Endothelial cell of umbilical vein (primary cell): ENCODE measurements at regions of chr12 and their contacts with region 1.

Region 1: DNA sequence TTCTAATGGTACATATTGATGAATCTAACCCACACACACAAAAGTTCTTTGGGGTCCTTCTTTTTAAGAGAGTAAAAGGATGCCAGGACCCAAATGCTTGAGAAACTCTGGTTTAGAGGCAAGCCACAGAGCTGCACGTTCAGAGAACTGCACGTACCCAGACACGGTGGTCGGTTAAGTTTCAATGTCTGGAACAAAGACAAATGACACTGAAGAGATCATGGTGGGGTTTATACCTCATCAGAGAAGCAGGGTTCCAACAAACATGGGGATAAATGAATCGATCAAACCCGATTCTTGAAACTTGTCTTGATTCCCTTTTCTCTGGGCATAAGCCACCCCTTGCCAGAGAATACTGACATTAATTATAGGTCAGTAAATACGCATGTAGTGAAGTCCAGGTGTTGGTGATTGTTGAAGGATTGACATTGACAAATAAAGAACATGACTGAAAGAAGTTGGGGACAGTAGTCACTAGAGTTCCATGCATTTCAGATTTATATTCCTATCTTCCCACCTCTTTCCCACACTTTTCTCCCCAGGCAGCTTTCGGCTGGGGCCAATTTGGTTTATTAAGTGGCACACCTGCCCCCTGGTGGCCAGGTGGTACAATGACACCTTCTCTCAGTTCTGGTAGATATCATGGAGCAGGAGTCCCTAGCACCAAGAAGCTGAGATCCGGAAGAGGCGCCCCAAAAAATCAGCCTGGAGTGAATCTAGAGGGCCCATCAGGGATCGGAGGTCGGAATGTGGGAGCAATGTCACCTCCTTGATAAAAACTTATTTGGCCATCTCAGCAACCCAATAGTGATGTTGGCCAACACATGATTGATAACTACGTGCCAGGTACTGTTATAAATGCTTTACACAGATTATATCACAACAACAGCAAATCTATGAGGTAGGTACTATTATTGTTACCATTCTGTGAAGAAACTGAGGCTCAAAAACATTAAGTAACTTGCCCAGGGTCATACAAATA is 17.8 kb upstream of the HDAC7 start:
- DNase-seq: peak; percentile 70
- H3K4me3 ChIP-seq: no peak overlapping the region
- H3K27ac ChIP-seq: no peak overlapping the region
- H3K4me1 ChIP-seq: no peaks in the 10 kb centered on the region
- H3K27me3 ChIP-seq: no peaks in the 10 kb centered on the region
- CTCF ChIP-seq: peak; percentile 75 to 80
- POLR2A ChIP-seq: no peak

Region 2: GRCh38 chr12:47705566-47706425 is 131.7 kb before region 1 on chr12 and contains the start of gene RPAP3:
- CTCF ChIA-PET with region 1: interaction called, 172 read pairs
- POLR2A ChIA-PET with region 1: no interaction called
- dilution Hi-C with region 1: no loop called
- intact Hi-C with region 1: no loop called
- DNase-seq: peak; percentile 93
- H3K4me3 ChIP-seq: peak within 1 kb of the TSS; percentile 65 to 90 (median 83)
- H3K27ac ChIP-seq: peak within 1 kb of the TSS; percentile 61
- H3K4me1 ChIP-seq: peaks cover 14% of the 10 kb centered on the region
- H3K27me3 ChIP-seq: no peaks in the 10 kb centered on the region
- CTCF ChIP-seq: peak; percentile 62 to 78
- POLR2A ChIP-seq: peak; percentile 87
- total RNA-seq, gene RPAP3: 29.8 and 32.5 TPM in 2 replicates

Region 3: GRCh38 chr12:47736877-47737676 is 100.4 kb before region 1 on chr12:
- CTCF ChIA-PET with region 1: interaction called, 136 read pairs
- POLR2A ChIA-PET with region 1: interaction called, 3 read pairs
- dilution Hi-C with region 1: no loop called
- intact Hi-C with region 1: loop called (anchors 1 kb)
- DNase-seq: peak; percentile 14
- H3K4me3 ChIP-seq: no peak overlapping the region
- H3K27ac ChIP-seq: no peak overlapping the region
- H3K4me1 ChIP-seq: peaks cover 14% of the 10 kb centered on the region
- H3K27me3 ChIP-seq: no peaks in the 10 kb centered on the region
- CTCF ChIP-seq: no peak
- POLR2A ChIP-seq: no peak

Region 4: DNA sequence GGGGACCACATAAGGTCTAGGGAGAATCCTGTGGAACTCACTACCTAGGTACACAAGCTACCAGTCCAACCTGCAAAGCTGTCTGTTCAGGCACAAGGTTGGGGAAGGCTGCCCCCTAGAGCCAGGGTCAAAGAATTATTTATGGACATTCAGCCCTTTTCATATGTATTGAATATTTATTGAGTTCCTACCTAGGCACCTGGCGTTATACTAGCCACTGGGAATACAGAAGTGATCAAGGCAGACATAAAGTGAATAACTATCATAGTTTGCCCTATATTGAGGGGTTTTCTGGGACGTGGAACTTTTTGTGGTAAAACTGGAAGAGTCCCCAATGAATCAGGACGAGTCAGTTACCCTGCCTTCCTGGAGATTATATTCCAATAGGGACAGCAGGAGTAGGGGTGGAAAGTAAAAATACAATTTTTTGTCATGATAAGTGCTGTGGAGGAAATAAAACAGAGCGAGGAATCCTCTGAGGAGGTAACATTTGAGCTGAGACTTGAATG is 70.2 kb before region 1 on chr12:
- CTCF ChIA-PET with region 1: interaction called, 99 read pairs
- POLR2A ChIA-PET with region 1: no interaction called
- dilution Hi-C with region 1: no loop called
- intact Hi-C with region 1: no loop called
- DNase-seq: peak; percentile 66
- H3K4me3 ChIP-seq: no peak overlapping the region
- H3K27ac ChIP-seq: no peak overlapping the region
- H3K4me1 ChIP-seq: peaks cover 6% of the 10 kb centered on the region
- H3K27me3 ChIP-seq: no peaks in the 10 kb centered on the region
- CTCF ChIP-seq: peak; percentile 64 to 66
- POLR2A ChIP-seq: no peak

Region 5: GRCh38 chr12:47797441-47797840 is 40.0 kb before region 1 on chr12:
- CTCF ChIA-PET with region 1: interaction called, 427 read pairs
- POLR2A ChIA-PET with region 1: interaction called, 6 read pairs
- dilution Hi-C with region 1: no loop called
- intact Hi-C with region 1: loop called (anchors 1 kb)
- DNase-seq: no peak
- H3K4me3 ChIP-seq: no peak overlapping the region
- H3K27ac ChIP-seq: no peak overlapping the region
- H3K4me1 ChIP-seq: peaks cover 23% of the 10 kb centered on the region
- H3K27me3 ChIP-seq: no peaks in the 10 kb centered on the region
- CTCF ChIP-seq: peak; percentile 6 to 45
- POLR2A ChIP-seq: no peak

Region 6: GRCh38 chr12:47850153-47851084 is 12.9 kb after region 1 on chr12:
- CTCF ChIA-PET with region 1: interaction called, 21 read pairs
- POLR2A ChIA-PET with region 1: no interaction called
- dilution Hi-C with region 1: no loop called
- intact Hi-C with region 1: no loop called
- DNase-seq: no peak
- H3K4me3 ChIP-seq: no peak overlapping the region
- H3K27ac ChIP-seq: no peak overlapping the region
- H3K4me1 ChIP-seq: peaks cover 7% of the 10 kb centered on the region
- H3K27me3 ChIP-seq: no peaks in the 10 kb centered on the region
- CTCF ChIP-seq: no peak
- POLR2A ChIP-seq: no peak

Region 7: DNA sequence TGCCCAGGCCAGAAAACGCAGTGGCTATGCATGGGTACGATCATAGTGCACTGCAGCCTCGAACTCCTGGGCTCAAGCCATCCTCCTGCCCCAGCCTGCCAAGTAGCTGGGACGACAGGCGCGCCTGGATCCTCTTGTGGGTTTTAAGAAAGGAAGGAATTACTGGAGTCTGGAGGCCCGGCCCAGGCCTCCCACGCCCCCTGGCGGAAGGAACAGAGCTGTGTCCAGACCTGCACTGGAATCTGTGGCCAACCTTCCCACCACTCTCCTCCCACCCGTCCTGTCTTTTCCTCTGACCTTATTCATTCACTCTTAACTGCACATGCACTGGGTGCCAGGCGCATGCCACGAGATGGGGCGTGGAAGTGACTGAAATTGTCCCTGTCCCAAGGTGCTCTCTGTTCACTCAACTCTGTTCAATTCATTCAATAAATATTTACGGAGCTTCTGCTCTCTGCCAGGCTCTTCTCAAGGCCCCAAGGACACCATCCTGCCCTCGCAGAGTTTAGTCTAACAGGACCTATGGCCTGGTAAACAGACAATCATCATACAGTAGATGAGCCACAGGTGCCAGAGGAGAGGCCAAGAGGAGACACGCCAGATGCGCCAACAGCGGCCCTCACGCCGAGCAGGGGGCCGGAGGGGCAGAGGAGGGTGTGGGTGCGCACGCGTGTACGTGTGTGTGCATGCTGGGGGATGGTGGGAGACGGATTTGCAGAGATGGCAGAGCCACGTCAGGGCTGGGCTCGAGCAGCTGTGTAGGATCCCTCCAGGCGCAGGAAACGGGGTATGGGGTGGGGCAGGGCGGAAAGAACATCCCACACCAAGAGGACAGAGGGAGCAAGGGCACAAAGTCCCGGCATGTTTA is 112.2 kb after region 1 on chr12:
- CTCF ChIA-PET with region 1: interaction called, 24 read pairs
- POLR2A ChIA-PET with region 1: no interaction called
- dilution Hi-C with region 1: no loop called
- intact Hi-C with region 1: loop called (anchors 1 kb)
- DNase-seq: peak; percentile 66
- H3K4me3 ChIP-seq: no peak overlapping the region
- H3K27ac ChIP-seq: no peak overlapping the region
- H3K4me1 ChIP-seq: no peaks in the 10 kb centered on the region
- H3K27me3 ChIP-seq: peaks cover 0 to 14% of the 10 kb centered on the region in 2 experiments
- CTCF ChIP-seq: peak; percentile 94 to 98
- POLR2A ChIP-seq: no peak